Activated naive CD8-positive, alpha-beta T cell treated with anti-CD3 and anti-CD28 coated beads, Interleukin-2, amount 10 ng/mL, durations not matched to agents 7 days and 5 days (primary cell): ENCODE measurements at regions of chr11 and their contacts with region 1.

Region 1: DNA sequence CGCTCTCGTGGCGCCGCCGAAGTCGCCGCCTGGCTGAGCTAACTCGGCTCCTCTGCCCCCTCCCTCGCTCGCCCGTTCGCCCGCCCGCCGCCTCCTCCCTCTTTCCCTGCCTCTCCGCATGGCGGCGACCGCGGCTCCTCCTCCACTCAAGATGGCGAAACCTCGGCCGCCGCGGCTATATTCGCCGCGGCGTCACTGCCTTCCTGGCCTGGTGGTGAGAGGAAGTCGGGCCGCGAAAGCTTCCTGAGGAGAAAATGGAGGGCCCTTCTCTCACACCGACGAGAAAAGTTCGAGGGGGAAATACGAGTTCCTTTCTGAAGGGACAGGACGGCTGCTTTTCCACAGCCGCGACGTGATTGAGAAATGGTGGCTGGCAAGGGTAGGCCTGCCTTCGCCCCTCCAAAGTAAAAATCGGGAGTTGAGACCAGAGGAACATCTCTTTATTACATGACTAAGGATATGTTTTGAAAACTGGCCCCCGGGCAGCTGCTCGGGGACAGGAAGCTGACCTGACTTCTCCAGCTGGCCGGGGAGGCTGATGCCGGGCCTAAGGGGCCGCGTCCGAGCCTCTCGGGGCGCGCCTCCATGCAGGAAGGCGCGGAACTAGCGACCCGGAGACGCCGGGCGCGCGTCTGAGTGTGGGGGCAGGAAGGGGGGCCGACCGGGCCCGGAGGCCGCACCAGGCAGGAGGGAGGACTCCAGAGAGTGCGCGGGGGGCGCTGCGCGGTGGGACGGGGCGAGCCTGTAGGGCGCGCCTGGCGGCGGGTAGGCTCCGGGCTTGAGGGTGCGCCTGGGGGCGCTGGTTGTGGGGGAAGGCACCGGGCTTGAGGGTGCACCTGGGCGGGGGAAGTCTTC is at the start of gene DDX6:
- DNase-seq: peak; percentile 92
- ATAC-seq: peak; percentile 59
- H3K4me3 Mint-ChIP-seq: peak within 1 kb of the TSS; percentile 100
- H3K27ac Mint-ChIP-seq: peak within 1 kb of the TSS; percentile 100
- H3K4me1 Mint-ChIP-seq: peaks cover 25% of the 10 kb centered on the region
- H3K27me3 Mint-ChIP-seq: no peaks in the 10 kb centered on the region
- total RNA-seq, gene DDX6: 193 to 212 TPM

Region 2: DNA sequence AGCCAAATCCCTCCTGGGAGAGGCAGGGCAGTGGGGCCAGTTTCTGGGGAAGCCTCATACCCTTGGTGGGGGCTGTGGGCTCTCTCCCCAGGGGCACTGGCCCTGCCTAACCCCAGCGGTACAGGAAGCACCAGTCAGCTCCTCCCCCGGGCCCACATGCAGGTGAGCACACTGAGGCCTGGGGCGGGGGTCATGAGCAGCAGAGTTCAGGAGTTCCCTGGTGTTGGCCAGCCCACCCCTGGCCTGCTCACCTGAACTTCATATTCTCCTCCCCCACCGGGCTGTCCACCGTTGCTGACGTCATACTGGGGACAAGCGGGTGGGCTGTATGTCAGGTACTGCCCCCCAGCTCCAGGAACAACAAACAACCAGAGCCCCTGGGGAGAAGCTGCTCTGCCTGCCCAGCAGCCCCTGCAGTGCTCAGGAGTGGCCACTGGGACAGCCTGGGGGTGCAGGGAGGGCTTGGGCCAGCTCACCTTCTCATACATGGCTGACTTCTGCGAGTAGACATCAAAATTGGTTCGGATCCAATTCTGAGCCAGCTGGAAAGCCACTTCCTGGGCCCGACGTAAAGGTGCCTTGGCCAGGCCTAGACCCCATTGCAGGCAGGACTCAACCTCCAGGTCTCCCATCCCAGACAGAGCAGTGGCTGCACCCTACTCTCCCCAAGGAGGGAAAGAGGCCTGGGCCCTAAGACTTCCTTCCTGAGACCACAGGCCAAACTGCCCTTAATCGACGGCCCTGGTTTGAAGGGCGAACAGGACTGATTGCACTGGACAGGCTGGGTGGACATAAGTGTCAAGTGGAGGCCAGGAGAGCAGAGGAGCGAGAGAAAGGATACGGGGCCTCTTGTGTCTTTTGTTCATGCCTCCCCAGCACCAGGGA is 132.7 kb before region 1 on chr11:
- POLR2A ChIA-PET with region 1: no interaction called
- DNase-seq: no peak
- ATAC-seq: no peak
- H3K4me3 Mint-ChIP-seq: no peak overlapping the region
- H3K27ac Mint-ChIP-seq: peak overlapping the region; percentile 54
- H3K4me1 Mint-ChIP-seq: peaks cover 3% of the 10 kb centered on the region
- H3K27me3 Mint-ChIP-seq: no peaks in the 10 kb centered on the region

Region 3: DNA sequence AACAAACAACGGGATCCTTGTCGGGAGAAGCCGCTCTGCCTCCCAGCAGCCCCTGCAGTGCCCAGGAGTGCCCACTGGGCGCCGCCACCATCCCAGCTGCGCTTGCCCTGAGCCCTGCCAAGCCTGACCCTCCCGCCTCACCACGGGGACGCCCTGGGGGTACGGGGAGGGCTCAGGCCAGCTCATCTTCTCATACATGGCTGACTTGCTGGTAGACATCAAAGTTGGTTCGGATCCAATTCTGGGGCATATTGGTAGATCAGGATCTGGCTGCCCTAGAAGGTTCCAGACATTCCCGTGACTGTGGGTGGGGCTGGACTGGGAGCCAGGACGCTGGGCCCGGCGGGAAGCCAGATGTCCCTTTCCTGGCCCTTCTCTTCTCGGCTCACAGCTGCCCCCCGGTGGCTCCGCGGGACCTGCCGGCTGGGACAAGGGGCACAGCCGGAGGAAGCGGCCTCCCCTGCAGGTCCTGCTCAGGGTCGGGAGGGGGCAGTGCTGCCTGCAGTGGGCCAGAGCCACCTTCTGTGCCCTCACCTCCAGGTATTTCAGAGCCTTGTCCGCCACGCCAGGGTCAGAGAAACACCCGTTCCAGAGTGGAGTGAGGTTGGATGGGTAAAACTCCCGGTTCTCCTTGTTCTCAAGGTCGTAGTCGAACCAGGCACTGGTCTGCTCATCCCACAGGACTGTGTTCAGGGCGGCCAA is 101.3 kb before region 1 on chr11:
- POLR2A ChIA-PET with region 1: interaction called, 12 read pairs
- DNase-seq: peak; percentile 86
- ATAC-seq: peak; percentile 94
- H3K4me3 Mint-ChIP-seq: peak overlapping the region; percentile 77
- H3K27ac Mint-ChIP-seq: peak overlapping the region; percentile 58
- H3K4me1 Mint-ChIP-seq: peaks cover 27% of the 10 kb centered on the region
- H3K27me3 Mint-ChIP-seq: peaks cover 12% of the 10 kb centered on the region

Region 4: DNA sequence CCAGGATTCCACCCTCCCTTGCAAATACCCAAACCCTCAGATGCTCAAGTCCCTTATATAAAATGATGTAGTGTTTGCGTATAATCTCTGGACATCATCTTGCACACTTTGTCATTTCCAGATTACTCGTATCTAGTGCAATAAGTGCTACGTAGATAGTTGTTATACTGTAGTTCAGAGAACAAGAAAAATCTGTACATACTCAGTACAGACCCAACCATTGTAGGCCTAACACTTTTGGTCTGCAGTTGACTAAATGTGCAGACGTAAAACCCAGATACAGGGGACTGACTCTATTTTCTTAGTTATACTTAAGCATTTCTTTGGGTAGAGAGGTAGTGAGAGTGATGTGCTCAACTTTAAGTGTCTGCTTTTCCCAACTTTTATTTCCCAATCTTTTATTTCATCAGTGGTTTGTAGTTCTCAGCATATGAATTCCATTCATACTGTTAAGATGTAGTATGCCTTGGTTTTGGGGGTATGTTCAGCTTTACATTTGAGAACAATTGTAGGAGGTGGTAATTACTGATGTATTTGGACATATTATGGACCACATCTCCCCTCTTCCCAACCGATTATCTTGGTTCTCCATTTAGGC is 44.3 kb before region 1 on chr11:
- POLR2A ChIA-PET with region 1: no interaction called
- DNase-seq: no peak
- ATAC-seq: no peak
- H3K4me3 Mint-ChIP-seq: no peak overlapping the region
- H3K27ac Mint-ChIP-seq: no peak overlapping the region
- H3K4me1 Mint-ChIP-seq: peaks cover 2% of the 10 kb centered on the region
- H3K27me3 Mint-ChIP-seq: no peaks in the 10 kb centered on the region

Region 5: DNA sequence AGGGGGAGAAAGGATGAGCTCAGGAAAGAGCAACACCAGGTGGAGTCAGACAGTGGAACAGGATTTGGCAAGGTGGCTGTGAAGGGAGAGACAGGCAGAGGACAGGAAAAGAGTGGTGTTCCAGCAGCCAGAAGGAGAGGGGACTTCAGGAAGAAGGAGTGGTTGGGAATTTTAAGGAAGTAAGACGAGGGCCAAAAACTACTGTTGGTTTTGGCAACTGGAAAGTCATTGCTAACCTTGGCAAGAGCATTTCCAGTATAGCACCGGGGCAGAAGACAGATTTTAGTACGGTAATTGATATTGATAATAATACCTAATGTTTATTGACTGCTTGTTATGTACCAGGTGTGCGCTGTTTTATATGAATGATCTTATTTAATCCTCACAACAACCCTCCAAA is 15.1 kb after region 1 on chr11:
- POLR2A ChIA-PET with region 1: interaction called, 16 read pairs
- DNase-seq: no peak
- ATAC-seq: no peak
- H3K4me3 Mint-ChIP-seq: no peak overlapping the region
- H3K27ac Mint-ChIP-seq: no peak overlapping the region
- H3K4me1 Mint-ChIP-seq: peaks cover 7% of the 10 kb centered on the region
- H3K27me3 Mint-ChIP-seq: no peaks in the 10 kb centered on the region

Region 6: GRCh38 chr11:118870396-118871345 is 79.3 kb after region 1 on chr11:
- POLR2A ChIA-PET with region 1: interaction called, 177 read pairs
- DNase-seq: no peak
- ATAC-seq: peak; percentile 56
- H3K4me3 Mint-ChIP-seq: peak overlapping the region; percentile 82
- H3K27ac Mint-ChIP-seq: peak overlapping the region; percentile 93
- H3K4me1 Mint-ChIP-seq: peaks cover 39% of the 10 kb centered on the region
- H3K27me3 Mint-ChIP-seq: no peaks in the 10 kb centered on the region

Region 7: GRCh38 chr11:118895142-118896039 is 104.1 kb after region 1 on chr11:
- POLR2A ChIA-PET with region 1: interaction called, 142 read pairs
- DNase-seq: peak; percentile 77
- ATAC-seq: peak; percentile 80
- H3K4me3 Mint-ChIP-seq: peak overlapping the region; percentile 69
- H3K27ac Mint-ChIP-seq: peak overlapping the region; percentile 88
- H3K4me1 Mint-ChIP-seq: peaks cover 52% of the 10 kb centered on the region
- H3K27me3 Mint-ChIP-seq: no peaks in the 10 kb centered on the region

Region 8: DNA sequence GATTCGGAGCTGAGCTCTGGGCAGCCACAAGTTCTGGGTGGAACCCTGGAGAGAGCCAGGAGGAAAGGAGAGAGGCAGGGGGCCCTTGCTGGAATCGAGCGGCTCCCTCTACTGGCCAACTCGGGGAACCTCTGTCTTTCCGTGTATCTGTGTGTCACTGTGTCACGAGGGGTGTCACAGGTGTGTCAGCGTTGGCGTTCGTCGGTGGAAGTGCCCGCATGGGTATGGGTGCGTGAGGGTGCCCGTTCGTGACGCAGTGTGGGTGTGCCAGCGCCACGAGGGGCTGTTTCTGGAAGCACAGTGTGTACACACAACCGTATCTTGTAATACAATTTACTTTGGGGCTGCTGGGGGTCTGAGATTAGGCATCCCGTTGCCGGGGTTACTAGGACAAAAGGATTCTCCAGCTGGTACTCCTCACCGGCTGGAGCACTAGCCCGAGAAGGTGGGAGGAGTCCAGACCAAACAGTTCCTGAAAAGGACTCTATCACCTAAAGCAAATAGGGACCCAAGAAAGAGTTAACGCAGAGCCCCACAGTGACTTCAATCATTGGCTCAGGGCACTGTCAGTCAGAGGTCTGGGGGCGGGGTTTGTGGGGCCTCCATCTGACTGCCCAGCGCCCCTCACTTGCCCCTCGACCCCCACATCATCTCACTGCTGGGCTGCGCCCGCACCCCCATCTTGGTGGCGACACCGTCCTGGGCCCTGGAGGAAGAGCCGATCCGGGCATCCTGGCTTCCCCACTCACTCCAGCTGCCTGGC is 137.0 kb after region 1 on chr11:
- POLR2A ChIA-PET with region 1: interaction called, 44 read pairs
- DNase-seq: peak; percentile 96
- ATAC-seq: peak; percentile 46
- H3K4me3 Mint-ChIP-seq: peak overlapping the region; percentile 99
- H3K27ac Mint-ChIP-seq: peak overlapping the region; percentile 93
- H3K4me1 Mint-ChIP-seq: peaks cover 50% of the 10 kb centered on the region
- H3K27me3 Mint-ChIP-seq: no peaks in the 10 kb centered on the region

Region 9: GRCh38 chr11:118997627-118998387 is 206.5 kb after region 1 on chr11 and contains the start of gene CENATAC:
- POLR2A ChIA-PET with region 1: interaction called, 13 read pairs
- DNase-seq: peak; percentile 97
- ATAC-seq: peak; percentile 96
- H3K4me3 Mint-ChIP-seq: peak within 1 kb of the TSS; percentile 100
- H3K27ac Mint-ChIP-seq: peak within 1 kb of the TSS; percentile 99
- H3K4me1 Mint-ChIP-seq: peaks cover 25% of the 10 kb centered on the region
- H3K27me3 Mint-ChIP-seq: no peaks in the 10 kb centered on the region
- total RNA-seq, gene CENATAC: 66.8 to 74.2 TPM